Tibial artery (tissue), 4 donors: ENCODE measurements at regions of chr17 and their contacts with region 1.

Region 1: GRCh38 chr17:7261172-7261927 is 928 bp downstream of the CLDN7 start:
- DNase-seq: no peak
- H3K4me3 ChIP-seq: peak overlapping the region; percentile 32 to 52
- H3K27ac ChIP-seq: no peak overlapping the region
- H3K4me1 ChIP-seq: peaks cover 0 to 38% (median 21%) of the 10 kb centered on the region in 4 donors
- H3K27me3 ChIP-seq: peaks cover 6 to 60% of the 10 kb centered on the region in 2 donors
- CTCF ChIP-seq: no peak

Region 2: DNA sequence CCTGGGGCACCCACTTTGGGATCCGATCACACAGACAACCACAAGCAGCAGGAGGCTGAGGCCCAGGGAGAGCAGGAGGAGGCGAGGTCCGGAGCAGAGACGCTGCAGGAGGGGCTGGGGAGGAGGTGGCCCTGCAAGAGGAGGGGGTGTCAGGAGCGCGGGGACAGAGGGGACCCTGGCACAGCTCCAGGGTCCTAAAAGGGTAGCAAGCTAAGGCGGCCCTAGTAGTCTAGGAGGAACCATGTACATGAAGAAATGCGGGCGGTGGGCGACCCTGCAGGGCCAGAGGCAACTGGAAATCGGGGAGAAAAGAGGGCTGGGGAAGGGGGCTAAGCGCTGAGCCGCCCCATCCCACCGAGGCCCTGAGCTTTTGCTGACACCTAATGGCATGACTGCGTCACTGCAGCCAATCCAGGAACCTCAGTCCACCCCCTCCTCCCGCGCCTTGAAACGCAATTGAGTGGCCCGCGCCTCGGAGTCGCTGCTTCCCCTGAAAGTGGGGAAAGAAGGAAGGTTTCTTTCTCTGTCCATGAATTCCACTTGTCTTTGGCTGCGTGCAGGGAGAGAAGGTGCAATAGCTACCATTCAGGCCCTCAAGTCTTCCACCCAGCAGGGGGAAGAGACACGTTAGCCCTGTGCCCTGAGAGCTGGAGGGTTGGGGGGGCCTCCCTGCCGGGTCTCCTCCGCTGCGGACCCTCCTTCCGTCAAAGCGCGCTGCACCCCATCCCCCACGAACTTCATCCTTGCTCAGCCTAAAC is 84.0 kb before region 1 on chr17:
- intact Hi-C with region 1: no loop called
- DNase-seq: peak; percentile 45 to 74
- H3K4me3 ChIP-seq: peak overlapping the region in 1 of 2 donors; percentile 15
- H3K27ac ChIP-seq: no peak overlapping the region
- H3K4me1 ChIP-seq: peaks cover 0 to 15% (median 12%) of the 10 kb centered on the region in 4 donors
- H3K27me3 ChIP-seq: peaks cover 0 to 64% of the 10 kb centered on the region in 2 donors
- CTCF ChIP-seq: peak; percentile 56 to 86

Region 3: DNA sequence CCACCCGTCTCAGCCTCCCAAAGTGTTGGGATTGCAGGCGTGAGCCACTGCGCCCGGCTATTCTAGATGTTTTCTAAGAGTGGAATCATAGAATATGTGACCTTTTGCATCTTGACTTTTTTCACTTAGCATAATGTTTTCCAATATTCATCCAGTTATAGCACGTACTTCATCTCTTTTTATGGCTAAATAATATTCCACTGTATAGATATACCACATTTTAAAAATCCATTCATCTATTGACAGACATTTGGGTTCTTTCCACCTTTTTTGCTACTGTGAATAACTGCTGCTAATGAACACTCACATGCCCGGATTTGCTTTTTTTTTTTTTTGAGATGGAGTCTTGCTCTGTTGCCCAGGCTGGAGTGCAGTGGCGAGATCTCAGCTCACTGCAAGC is 42.8 kb after region 1 on chr17:
- intact Hi-C with region 1: loop called (anchors 5 kb)
- DNase-seq: no peak
- H3K4me3 ChIP-seq: no peak overlapping the region
- H3K27ac ChIP-seq: no peak overlapping the region
- H3K4me1 ChIP-seq: peaks cover 0 to 12% (median 9%) of the 10 kb centered on the region in 4 donors
- H3K27me3 ChIP-seq: peaks cover 0 to 6% of the 10 kb centered on the region in 2 donors
- CTCF ChIP-seq: no peak